Common myeloid progenitor, CD34-positive (primary cell): ENCODE measurements at regions of chr6 and their contacts with region 1.

Region 1: GRCh38 chr6:83215131-83216047 is 22.2 kb downstream of the RWDD2A start:
- DNase-seq: peak; percentile 71 to 82 (median 80)
- H3K4me3 ChIP-seq: no peak overlapping the region
- H3K27ac ChIP-seq: no peak overlapping the region
- H3K4me1 ChIP-seq: no peaks in the 10 kb centered on the region
- H3K27me3 ChIP-seq: peaks cover 0 to 2% (median 0%) of the 10 kb centered on the region in 5 experiments

Region 2: DNA sequence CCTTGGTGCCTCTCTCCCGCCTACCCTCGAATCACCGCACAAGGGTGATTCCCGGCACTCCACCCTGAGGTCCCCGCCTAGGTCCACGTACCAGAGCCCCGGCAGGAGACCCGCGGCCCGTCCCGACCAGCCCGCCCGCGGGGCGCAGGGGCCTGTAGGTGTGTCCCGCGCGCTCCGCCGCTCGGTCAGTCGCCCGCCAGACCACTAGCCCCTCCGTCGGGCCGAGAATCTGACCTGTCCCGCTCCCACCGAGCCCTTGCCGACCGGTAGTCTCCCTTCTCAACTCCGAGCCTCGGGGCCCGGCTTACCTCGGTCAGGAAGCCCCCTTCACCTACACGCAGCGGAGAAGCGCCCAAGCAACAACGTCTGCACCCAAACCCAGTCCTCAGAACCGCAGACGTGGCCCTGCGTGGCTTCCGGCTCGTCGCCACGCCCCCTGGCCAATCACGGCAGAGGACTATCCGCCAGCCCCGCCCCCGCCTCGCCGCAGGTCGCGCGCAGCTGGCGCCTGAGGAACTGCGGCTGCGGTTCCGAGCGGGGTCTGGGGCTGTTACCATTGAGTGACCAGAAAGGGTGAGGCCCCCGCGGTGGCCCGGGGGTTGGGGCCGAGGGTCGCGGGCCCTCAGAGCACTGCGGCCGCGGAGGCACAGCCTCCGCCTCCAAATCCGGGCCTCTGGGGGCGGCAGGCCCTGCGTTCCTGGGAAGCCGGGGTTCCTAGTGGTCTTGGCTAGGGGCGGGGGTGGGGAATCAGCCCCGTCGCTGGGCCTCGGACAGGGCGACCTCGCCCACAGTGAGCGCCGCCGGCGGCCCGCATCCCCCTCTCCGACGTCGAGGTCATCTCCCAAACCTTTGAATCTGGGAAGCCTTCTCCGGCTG is 22.3 kb before region 1 on chr6 and contains the starts of genes PGM3 and RWDD2A:
- CTCF ChIA-PET with region 1: interaction called, 11 read pairs
- POLR2A ChIA-PET with region 1: interaction called, 3 read pairs
- DNase-seq: peak; percentile 84 to 94 (median 93)
- H3K4me3 ChIP-seq: peak within 1 kb of the TSS; percentile 86 to 100 (median 92)
- H3K27ac ChIP-seq: peak within 1 kb of the TSS in 1 of 2 experiments; percentile 78
- H3K4me1 ChIP-seq: peaks cover 8 to 18% (median 11%) of the 10 kb centered on the region in 4 experiments
- H3K27me3 ChIP-seq: peaks cover 0 to 3% (median 0%) of the 10 kb centered on the region in 5 experiments

Region 3: DNA sequence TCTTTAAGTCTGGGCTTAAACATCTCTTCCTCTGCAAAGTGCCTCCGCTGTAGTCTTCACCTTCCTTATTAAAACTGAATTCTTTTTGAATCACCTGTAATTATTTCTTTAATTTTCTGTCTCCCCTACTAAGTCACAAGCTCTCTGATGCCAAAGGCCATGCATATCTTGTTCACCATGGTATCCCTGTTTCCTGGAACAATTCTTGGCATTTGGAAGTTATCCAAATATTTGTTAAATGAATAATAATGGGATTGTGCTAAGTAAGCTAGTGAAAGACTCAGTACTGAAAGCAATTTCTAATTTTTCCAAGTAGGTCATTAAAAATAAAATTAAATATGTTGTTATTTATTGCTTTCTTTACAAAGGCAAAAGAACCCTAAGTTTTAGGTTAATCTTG is 481.3 kb after region 1 on chr6:
- CTCF ChIA-PET with region 1: no interaction called
- POLR2A ChIA-PET with region 1: interaction called, 12 read pairs
- DNase-seq: no peak
- H3K4me3 ChIP-seq: no peak overlapping the region
- H3K27ac ChIP-seq: no peak overlapping the region
- H3K4me1 ChIP-seq: no peaks in the 10 kb centered on the region
- H3K27me3 ChIP-seq: peaks cover under 1 to 4% (median 2%) of the 10 kb centered on the region in 5 experiments